Activated CD4-positive, alpha-beta T cell treated with anti-CD3 and anti-CD28 coated beads for 36 hours (primary cell): ENCODE measurements at regions of chr9 and their contacts with region 1.

Region 1: GRCh38 chr9:124617471-124618141 is 110.4 kb upstream of the NR5A1 start:
- DNase-seq: peak; percentile 88
- ATAC-seq: peak; percentile 87
- H3K4me3 Mint-ChIP-seq: no peak overlapping the region
- H3K27ac Mint-ChIP-seq: no peak overlapping the region
- H3K4me1 Mint-ChIP-seq: no peaks in the 10 kb centered on the region
- H3K27me3 Mint-ChIP-seq: peaks cover 4% of the 10 kb centered on the region

Region 2: GRCh38 chr9:124635285-124635684 is 17.7 kb after region 1 on chr9:
- CTCF ChIA-PET with region 1: interaction called, 12 read pairs
- POLR2A ChIA-PET with region 1: no interaction called
- intact Hi-C with region 1: no loop called
- DNase-seq: peak; percentile 26
- ATAC-seq: peak; percentile 93
- H3K4me3 Mint-ChIP-seq: no peak overlapping the region
- H3K27ac Mint-ChIP-seq: no peak overlapping the region
- H3K4me1 Mint-ChIP-seq: peaks cover 4% of the 10 kb centered on the region
- H3K27me3 Mint-ChIP-seq: peaks cover 10% of the 10 kb centered on the region

Region 3: DNA sequence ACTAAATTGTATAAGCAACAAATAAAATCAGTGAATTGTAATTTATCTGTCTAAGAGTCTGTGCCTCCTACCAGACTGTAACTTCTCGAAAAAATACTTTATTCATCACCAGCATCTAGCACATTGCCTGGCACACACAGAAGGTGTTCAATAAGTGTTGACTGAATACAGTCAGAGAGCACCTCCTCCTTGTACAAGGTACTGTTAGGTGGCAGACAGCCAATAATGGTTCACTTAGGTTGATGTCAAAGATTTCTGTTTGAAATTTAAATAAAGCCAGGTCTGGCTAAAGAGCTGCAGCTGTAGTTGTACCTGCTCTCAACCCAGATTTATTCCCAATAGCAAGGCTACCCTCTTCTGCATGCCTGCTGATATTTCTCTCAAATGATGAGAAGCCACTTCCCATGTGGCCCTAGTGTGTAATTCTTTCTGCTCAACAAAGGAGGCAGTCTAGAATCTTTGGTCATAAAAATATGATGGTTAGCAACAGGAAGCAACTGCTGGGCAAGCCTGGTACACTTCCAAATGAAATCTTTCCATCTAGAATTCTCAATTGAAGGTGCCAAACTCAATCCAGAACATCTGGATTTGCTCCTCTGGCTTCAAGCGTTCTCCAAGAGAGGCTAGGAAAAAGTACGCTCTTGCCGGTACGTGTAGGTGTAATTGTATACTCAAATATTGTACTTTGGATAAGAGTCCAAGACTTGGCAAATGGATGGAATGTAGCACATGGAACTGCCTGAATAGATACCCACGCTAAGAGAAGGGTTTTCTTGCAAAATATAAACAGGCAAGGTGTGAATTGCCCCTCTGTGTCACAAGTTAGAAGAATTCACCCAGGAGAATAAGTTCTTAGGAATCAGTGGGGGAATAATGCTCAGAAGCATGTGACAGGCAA is 57.9 kb after region 1 on chr9:
- CTCF ChIA-PET with region 1: interaction called, 12 read pairs
- POLR2A ChIA-PET with region 1: no interaction called
- intact Hi-C with region 1: no loop called
- DNase-seq: no peak
- ATAC-seq: no peak
- H3K4me3 Mint-ChIP-seq: no peak overlapping the region
- H3K27ac Mint-ChIP-seq: no peak overlapping the region
- H3K4me1 Mint-ChIP-seq: peaks cover 15% of the 10 kb centered on the region
- H3K27me3 Mint-ChIP-seq: peaks cover 2% of the 10 kb centered on the region

Region 4: DNA sequence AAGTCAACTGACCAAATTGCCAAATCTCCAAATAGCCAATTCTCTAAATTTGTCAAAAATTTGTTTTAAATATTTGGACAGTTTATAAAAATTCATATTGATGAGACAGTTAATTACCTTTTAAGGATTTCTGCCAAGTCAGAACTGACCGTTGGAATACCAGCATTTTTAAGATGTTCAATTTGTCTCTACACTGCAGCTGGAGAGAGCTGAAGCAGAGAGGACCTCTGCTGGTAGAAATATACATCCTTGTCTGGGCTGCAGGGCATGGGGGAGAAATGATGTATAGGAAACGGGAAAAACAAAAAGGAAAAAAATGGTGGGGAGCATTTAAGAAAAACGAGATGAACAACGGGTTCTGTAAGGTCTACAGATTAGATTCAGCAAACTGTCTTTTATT is 136.7 kb after region 1 on chr9:
- CTCF ChIA-PET with region 1: no interaction called
- POLR2A ChIA-PET with region 1: no interaction called
- intact Hi-C with region 1: loop called (anchors 5 kb)
- DNase-seq: no peak
- ATAC-seq: no peak
- H3K4me3 Mint-ChIP-seq: no peak overlapping the region
- H3K27ac Mint-ChIP-seq: no peak overlapping the region
- H3K4me1 Mint-ChIP-seq: peaks cover 16% of the 10 kb centered on the region
- H3K27me3 Mint-ChIP-seq: peaks cover 48% of the 10 kb centered on the region

Region 5: GRCh38 chr9:125374443-125375309 is 757.1 kb after region 1 on chr9:
- CTCF ChIA-PET with region 1: no interaction called
- POLR2A ChIA-PET with region 1: no interaction called
- intact Hi-C with region 1: loop called in 1 of 2 experiments (anchors 10 kb)
- DNase-seq: peak; percentile 85
- ATAC-seq: peak; percentile 97
- H3K4me3 Mint-ChIP-seq: peak overlapping the region; percentile 26
- H3K27ac Mint-ChIP-seq: no peak overlapping the region
- H3K4me1 Mint-ChIP-seq: peaks cover 2% of the 10 kb centered on the region
- H3K27me3 Mint-ChIP-seq: no peaks in the 10 kb centered on the region